ENCODE measurements at regions of chr6 and their contacts with region 1.

Region 1: DNA sequence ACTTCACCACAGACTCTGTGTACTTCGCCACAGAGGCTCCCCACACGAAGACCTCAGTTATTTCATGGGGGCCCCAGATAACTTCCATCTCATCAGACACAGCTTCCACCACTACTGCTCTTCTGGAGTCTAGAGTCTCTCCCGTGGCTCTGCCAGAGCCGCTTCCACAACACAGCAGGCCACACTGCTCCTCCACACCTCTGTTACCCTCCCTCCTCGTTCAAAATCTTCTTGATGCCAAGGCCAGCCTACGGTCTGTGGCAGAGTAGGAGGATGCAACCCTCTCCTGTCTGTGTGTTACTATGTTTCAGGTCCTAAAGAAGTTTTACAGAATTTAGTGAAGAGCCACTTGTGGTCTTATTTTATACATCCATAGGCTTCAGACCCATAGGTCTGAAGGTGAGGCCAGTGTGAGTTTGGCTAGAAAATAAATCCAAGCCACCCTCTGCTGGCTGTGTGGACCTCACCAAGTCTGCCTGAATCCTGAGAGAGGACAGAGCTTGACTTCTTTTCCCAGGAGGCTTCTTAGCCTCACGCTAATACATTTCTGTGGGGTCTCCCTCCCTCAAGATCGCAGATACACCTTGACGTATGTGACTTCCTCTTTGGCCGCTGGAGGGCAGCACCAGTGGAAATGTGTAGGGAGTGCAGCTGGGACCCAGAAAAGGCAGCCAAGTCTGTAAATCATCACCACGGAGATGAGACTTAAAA is 197.7 kb downstream of the FAXC start:
- DNase-seq: no peak
- H3K4me3 ChIP-seq: no peak overlapping the region
- CTCF ChIP-seq: peak; percentile 75

Region 2: GRCh38 chr6:99241905-99242534 is 90.2 kb after region 1 on chr6:
- CTCF ChIA-PET with region 1: interaction called, 26 read pairs
- POLR2A ChIA-PET with region 1: no interaction called
- DNase-seq: peak; percentile 5
- H3K4me3 ChIP-seq: no peak overlapping the region
- CTCF ChIP-seq: peak; percentile 48